Activated CD8-positive, alpha-beta memory T cell treated with anti-CD3 and anti-CD28 coated beads, Interleukin-2, amount 10 ng/mL, durations not matched to agents 7 days and 5 days (primary cell): ENCODE measurements at regions of chr5 and their contacts with region 1.

Region 1: GRCh38 chr5:67221487-67222242 is 25.1 kb upstream of the CD180 start:
- DNase-seq: peak; percentile 93
- ATAC-seq: peak; percentile 92
- H3K4me3 Mint-ChIP-seq: peak overlapping the region; percentile 59
- H3K27ac Mint-ChIP-seq: peak overlapping the region; percentile 92
- H3K4me1 Mint-ChIP-seq: peaks cover 60% of the 10 kb centered on the region
- H3K27me3 Mint-ChIP-seq: no peaks in the 10 kb centered on the region

Region 2: DNA sequence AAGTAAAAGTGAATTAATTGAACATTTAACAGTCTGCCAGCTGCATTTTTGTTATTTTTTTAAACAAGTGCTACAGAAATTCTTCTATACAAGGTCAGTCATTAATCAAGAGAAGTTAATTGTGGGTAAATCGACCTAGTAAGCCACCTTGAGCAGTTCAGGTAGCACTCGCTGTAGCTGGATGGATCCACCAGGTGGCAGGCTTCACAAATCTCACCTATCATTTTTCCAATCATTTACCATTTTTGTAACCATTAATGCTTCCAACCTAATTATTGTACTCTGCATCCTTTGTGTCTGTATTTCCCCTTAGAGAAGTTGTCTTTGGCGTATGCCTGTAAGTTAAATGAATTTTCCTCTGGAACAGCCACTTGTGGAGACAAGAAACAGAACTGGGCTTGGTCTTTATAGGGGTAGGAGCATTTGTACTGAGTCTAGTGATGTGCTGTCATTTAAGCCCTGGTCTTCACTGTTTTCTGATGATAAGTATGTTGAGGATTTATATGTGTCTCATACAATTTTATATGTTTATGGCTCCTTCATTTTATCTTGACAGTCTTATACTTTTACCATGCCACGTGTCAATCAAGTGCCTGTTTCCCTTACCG is 64.6 kb before region 1 on chr5:
- CTCF ChIA-PET with region 1: interaction called, 521 read pairs
- DNase-seq: peak; percentile 63
- ATAC-seq: peak; percentile 71
- H3K4me3 Mint-ChIP-seq: no peak overlapping the region
- H3K27ac Mint-ChIP-seq: peak overlapping the region; percentile 77
- H3K4me1 Mint-ChIP-seq: peaks cover 52% of the 10 kb centered on the region
- H3K27me3 Mint-ChIP-seq: no peaks in the 10 kb centered on the region

Region 3: DNA sequence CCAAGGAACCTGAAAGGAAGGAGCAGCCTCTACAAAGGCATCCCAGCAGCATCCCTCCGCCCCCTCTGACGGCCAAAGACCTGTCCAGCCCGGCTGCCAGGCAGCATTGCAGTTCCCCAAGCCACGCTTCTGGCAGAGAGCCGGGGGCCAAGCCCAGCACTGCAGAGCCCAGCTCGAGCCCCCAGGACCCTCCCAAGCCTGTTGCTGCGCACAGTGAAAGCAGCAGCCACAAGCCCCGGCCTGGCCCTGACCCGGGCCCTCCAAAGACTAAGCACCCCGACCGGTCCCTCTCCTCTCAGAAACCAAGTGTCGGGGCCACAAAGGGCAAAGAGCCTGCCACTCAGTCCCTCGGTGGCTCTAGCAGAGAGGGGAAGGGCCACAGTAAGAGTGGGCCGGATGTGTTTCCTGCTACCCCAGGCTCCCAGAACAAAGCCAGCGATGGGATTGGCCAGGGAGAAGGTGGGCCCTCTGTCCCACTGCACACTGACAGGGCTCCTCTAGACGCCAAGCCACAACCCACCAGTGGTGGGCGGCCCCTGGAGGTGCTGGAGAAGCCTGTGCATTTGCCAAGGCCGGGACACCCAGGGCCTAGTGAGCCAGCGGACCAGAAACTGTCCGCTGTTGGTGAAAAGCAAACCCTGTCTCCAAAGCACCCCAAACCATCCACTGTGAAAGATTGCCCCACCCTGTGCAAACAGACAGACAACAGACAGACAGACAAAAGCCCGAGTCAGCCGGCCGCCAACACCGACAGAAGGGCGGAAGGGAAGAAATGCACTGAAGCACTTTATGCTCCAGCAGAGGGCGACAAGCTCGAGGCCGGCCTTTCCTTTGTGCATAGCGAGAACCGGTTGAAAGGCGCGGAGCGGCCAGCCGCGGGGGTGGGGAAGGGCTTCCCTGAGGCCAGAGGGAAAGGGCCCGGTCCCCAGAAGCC is 55.9 kb before region 1 on chr5:
- CTCF ChIA-PET with region 1: interaction called, 521 read pairs
- DNase-seq: peak; percentile 96
- ATAC-seq: peak; percentile 82
- H3K4me3 Mint-ChIP-seq: peak overlapping the region; percentile 87
- H3K27ac Mint-ChIP-seq: peak overlapping the region; percentile 100
- H3K4me1 Mint-ChIP-seq: peaks cover 63% of the 10 kb centered on the region
- H3K27me3 Mint-ChIP-seq: no peaks in the 10 kb centered on the region

Region 4: DNA sequence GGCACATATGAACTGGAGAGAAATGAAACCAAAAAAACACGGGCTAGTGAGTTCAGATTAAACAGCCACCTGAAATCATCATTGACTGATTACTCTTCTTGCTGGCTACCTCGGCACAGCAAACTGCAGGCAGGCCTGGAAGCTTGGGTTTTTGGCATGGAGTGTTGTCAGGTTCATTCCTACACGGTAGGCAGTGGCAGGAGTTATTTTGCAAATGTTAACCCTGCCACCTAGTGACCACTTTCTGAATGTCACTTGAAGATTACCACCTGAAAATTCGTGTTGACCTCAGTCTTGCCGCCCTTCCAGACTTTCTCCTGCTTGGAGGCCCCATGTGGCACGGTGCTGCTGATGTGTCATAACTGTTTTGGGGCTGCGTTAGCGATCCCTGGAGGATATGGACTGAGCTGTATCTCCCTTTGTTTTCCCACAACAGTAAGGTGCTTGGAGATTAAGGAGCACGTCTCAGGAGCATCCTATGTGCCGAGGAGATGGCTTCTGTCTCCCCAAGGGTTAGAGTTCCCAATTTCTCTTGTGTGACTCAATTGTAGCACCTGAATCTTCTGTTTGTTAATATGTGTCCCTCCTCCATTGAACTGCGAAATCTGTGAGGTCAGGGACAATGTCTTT is 12.4 kb before region 1 on chr5:
- CTCF ChIA-PET with region 1: interaction called, 12 read pairs
- DNase-seq: peak; percentile 79
- ATAC-seq: peak; percentile 35
- H3K4me3 Mint-ChIP-seq: no peak overlapping the region
- H3K27ac Mint-ChIP-seq: peak overlapping the region; percentile 77
- H3K4me1 Mint-ChIP-seq: peaks cover 66% of the 10 kb centered on the region
- H3K27me3 Mint-ChIP-seq: peaks cover 2% of the 10 kb centered on the region

Region 5: DNA sequence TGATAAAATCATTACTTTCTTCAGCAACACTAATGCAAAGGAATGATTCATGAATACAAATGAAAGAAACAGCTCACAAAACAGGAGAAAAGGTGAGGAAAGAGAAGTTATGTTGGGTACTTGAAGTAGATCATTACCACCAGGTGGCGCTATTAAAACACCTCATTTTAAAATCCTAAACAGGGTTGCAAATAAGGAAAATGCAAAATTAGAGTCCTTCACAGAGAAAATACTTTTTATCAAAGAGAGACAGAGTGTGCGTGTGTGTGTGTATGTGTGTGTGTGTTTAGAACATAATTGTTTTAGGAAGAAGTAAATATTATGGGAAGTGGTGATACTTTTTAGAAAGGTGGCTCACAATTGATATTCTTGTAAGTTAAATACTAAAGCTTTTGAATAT is 24.4 kb after region 1 on chr5:
- CTCF ChIA-PET with region 1: interaction called, 17 read pairs
- DNase-seq: no peak
- ATAC-seq: no peak
- H3K4me3 Mint-ChIP-seq: no peak overlapping the region
- H3K27ac Mint-ChIP-seq: no peak overlapping the region
- H3K4me1 Mint-ChIP-seq: peaks cover 20% of the 10 kb centered on the region
- H3K27me3 Mint-ChIP-seq: no peaks in the 10 kb centered on the region